CD8-positive, alpha-beta memory T cell (primary cell): ENCODE measurements at regions of chr6 and their contacts with region 1.

Region 1: GRCh38 chr6:26216356-26216885 is 129.2 kb downstream of the HFE start:
- DNase-seq: peak; percentile 43 to 93 (median 91)
- H3K4me3 ChIP-seq: peak overlapping the region; percentile 91
- H3K4me3 Mint-ChIP-seq: no peak overlapping the region
- H3K27ac ChIP-seq: peak overlapping the region; percentile 94
- H3K27ac Mint-ChIP-seq: no peak overlapping the region
- H3K4me1 ChIP-seq: peaks cover 23% of the 10 kb centered on the region
- H3K4me1 Mint-ChIP-seq: peaks cover 2 to 8% (median 5%) of the 10 kb centered on the region in 3 donors
- H3K27me3 ChIP-seq: no peaks in the 10 kb centered on the region
- H3K27me3 Mint-ChIP-seq: no peaks in the 10 kb centered on the region

Region 2: GRCh38 chr6:26115226-26115625 is 101.2 kb before region 1 on chr6:
- CTCF ChIA-PET with region 1: no interaction called
- POLR2A ChIA-PET with region 1: no interaction called
- DNase-seq: no peak
- H3K4me3 ChIP-seq: no peak overlapping the region
- H3K4me3 Mint-ChIP-seq: no peak overlapping the region
- H3K27ac ChIP-seq: no peak overlapping the region
- H3K27ac Mint-ChIP-seq: no peak overlapping the region
- H3K4me1 ChIP-seq: no peaks in the 10 kb centered on the region
- H3K4me1 Mint-ChIP-seq: no peaks in the 10 kb centered on the region
- H3K27me3 ChIP-seq: no peaks in the 10 kb centered on the region
- H3K27me3 Mint-ChIP-seq: peaks cover 0 to 3% of the 10 kb centered on the region in 2 donors

Region 3: GRCh38 chr6:26175428-26176181 is 40.8 kb before region 1 on chr6:
- CTCF ChIA-PET with region 1: interaction called, 21 read pairs
- POLR2A ChIA-PET with region 1: interaction called, 37 read pairs
- DNase-seq: peak; percentile 8 to 63 (median 52)
- H3K4me3 ChIP-seq: no peak overlapping the region
- H3K4me3 Mint-ChIP-seq: peak overlapping the region in 2 of 7 donors; percentile 21 to 75
- H3K27ac ChIP-seq: no peak overlapping the region
- H3K27ac Mint-ChIP-seq: peak overlapping the region; percentile 8 to 89 (median 78)
- H3K4me1 ChIP-seq: peaks cover 36% of the 10 kb centered on the region
- H3K4me1 Mint-ChIP-seq: peaks cover 30 to 44% (median 40%) of the 10 kb centered on the region in 3 donors
- H3K27me3 ChIP-seq: no peaks in the 10 kb centered on the region
- H3K27me3 Mint-ChIP-seq: peaks cover 0 to 3% of the 10 kb centered on the region in 2 donors

Region 4: DNA sequence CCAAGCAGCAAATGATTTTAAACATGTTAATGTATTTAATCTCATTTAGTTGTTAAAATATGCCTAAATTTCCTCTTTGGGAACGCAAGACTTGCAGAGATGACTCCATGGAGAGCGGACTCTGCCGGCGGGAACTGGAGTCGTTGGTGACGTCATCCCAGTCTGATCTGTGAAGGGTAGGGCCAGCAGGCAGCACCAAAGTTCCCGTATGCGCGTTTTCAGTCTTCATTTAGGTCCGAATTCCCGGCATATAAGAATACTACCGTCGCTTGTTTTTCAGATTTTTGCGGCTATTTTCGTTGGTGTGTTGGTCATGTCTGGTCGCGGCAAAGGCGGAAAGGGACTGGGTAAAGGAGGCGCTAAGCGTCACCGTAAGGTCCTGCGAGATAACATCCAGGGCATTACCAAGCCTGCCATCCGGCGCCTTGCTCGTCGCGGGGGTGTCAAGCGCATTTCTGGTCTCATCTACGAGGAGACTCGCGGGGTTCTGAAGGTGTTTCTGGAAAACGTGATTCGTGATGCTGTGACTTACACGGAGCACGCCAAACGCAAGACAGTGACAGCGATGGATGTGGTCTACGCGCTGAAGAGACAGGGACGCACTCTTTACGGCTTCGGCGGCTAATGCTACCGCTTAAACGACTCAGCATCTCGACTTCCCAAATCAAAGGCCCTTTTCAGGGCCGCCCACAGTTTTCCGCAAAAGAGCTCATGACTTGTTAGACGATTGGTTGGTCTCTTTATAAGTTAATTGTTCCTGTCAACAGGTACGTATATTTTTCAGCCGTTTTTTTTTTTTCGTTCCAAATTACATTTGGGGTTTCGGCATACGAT is 11.9 kb before region 1 on chr6:
- CTCF ChIA-PET with region 1: interaction called, 114 read pairs
- POLR2A ChIA-PET with region 1: interaction called, 391 read pairs
- DNase-seq: peak; percentile 75 to 95 (median 87)
- H3K4me3 ChIP-seq: peak overlapping the region; percentile 73
- H3K4me3 Mint-ChIP-seq: no peak overlapping the region
- H3K27ac ChIP-seq: peak overlapping the region; percentile 99
- H3K27ac Mint-ChIP-seq: no peak overlapping the region
- H3K4me1 ChIP-seq: peaks cover 31% of the 10 kb centered on the region
- H3K4me1 Mint-ChIP-seq: peaks cover 18 to 31% (median 20%) of the 10 kb centered on the region in 3 donors
- H3K27me3 ChIP-seq: no peaks in the 10 kb centered on the region
- H3K27me3 Mint-ChIP-seq: peaks cover 0 to 8% of the 10 kb centered on the region in 2 donors

Region 5: GRCh38 chr6:26240154-26241032 is 24.0 kb after region 1 on chr6:
- CTCF ChIA-PET with region 1: interaction called, 40 read pairs
- POLR2A ChIA-PET with region 1: interaction called, 234 read pairs
- DNase-seq: peak; percentile 44 to 82 (median 81)
- H3K4me3 ChIP-seq: peak overlapping the region; percentile 63
- H3K4me3 Mint-ChIP-seq: peak overlapping the region; percentile 82 to 93 (median 85)
- H3K27ac ChIP-seq: peak overlapping the region; percentile 85
- H3K27ac Mint-ChIP-seq: peak overlapping the region; percentile 94 to 99 (median 96)
- H3K4me1 ChIP-seq: peaks cover 13% of the 10 kb centered on the region
- H3K4me1 Mint-ChIP-seq: peaks cover 19 to 31% (median 31%) of the 10 kb centered on the region in 3 donors
- H3K27me3 ChIP-seq: no peaks in the 10 kb centered on the region
- H3K27me3 Mint-ChIP-seq: no peaks in the 10 kb centered on the region

Region 6: DNA sequence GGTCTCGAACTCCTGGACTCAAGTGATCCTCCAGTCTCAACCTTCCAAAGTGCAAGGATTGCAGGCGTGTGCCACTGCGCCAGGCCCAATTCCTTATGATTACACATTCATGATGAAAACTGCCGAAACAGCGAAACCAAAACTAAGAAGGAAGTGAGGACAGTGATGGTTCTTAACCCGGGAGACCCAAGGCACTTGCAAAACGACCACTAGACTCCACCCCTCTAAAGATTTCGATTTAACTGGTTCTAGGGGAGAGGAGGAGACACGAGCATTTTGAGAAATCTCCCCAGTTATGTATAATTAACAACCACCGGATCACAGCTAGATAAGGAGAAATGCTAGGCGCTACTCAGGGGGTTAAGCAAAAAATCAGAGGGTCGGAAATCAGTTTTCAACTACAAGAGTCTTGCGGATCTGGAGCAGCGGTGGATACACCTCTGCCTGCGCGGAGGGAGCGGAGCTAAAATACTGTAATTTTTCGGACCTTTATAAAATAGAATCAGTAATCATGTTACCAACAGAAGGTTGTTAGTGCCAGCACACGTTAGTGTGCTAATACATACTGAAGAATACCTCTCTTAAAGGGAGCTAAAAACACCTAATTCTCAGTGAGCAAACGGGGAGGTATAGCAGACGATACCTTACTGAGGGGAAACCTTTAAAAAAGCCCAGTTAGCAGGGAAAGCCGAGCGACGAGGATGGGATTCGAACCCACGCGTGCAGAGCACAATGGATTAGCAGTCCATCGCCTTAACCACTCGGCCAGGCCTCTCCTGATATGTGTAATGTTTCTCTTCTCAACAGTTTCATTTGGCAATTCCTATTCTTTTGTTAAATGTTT is 88.6 kb after region 1 on chr6:
- CTCF ChIA-PET with region 1: no interaction called
- POLR2A ChIA-PET with region 1: no interaction called
- DNase-seq: peak; percentile 20 to 75 (median 64)
- H3K4me3 ChIP-seq: peak overlapping the region; percentile 49
- H3K4me3 Mint-ChIP-seq: peak overlapping the region; percentile 88 to 95 (median 94)
- H3K27ac ChIP-seq: peak overlapping the region; percentile 65
- H3K27ac Mint-ChIP-seq: peak overlapping the region; percentile 85 to 99 (median 95)
- H3K4me1 ChIP-seq: peaks cover 19% of the 10 kb centered on the region
- H3K4me1 Mint-ChIP-seq: peaks cover 41 to 59% (median 51%) of the 10 kb centered on the region in 3 donors
- H3K27me3 ChIP-seq: no peaks in the 10 kb centered on the region
- H3K27me3 Mint-ChIP-seq: peaks cover 0 to 8% of the 10 kb centered on the region in 2 donors

Region 7: GRCh38 chr6:26421259-26422144 is 205.1 kb after region 1 on chr6:
- CTCF ChIA-PET with region 1: no interaction called
- POLR2A ChIA-PET with region 1: no interaction called
- DNase-seq: peak; percentile 28 to 71 (median 65)
- H3K4me3 ChIP-seq: peak overlapping the region; percentile 81
- H3K4me3 Mint-ChIP-seq: no peak overlapping the region
- H3K27ac ChIP-seq: peak overlapping the region; percentile 83
- H3K27ac Mint-ChIP-seq: no peak overlapping the region
- H3K4me1 ChIP-seq: peaks cover 12% of the 10 kb centered on the region
- H3K4me1 Mint-ChIP-seq: peaks cover 12 to 32% (median 18%) of the 10 kb centered on the region in 3 donors
- H3K27me3 ChIP-seq: no peaks in the 10 kb centered on the region
- H3K27me3 Mint-ChIP-seq: no peaks in the 10 kb centered on the region

Region 8: DNA sequence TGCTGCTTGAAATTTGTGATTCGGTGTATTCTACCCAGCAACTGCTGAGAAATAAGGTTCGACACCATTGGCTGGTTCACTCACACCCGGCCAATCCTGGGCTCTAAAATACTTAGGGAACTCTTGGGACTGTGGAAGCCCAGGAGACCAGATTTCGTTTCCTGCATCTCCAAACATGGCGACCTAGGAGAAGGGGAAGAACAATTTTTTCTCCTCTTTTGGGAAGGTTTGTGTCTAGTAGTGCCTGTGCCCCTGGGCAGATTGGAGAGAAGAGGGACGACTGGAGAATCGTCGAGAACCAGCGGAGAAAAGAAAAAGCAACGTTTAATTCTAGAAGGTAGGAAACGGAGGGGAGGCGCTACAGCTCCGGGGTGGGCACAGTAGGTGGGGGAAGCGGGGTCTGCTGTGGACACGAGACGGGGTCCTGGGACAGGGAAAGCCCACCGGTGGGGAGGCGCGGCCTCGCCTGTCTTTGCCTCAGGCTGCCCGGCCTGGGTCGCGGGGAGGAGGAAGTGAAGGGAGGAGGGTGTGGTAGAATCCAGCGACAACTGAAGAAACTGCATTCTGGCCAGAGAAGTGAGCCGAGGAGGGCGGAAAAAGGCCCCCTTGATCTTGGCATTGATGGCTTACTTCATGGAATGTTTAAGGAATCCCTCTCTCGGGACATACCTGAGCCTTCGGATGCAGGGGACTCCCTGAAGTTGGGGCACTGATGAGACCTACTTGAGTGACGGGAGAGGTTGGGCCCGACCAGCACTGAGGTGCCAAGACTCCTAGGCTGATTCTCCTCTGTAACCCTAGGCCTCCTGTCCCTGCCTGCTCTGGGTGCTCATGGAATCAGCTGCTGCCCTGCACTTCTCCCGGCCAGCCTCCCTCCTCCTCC is 241.6 kb after region 1 on chr6 and contains the start of gene BTN2A1:
- CTCF ChIA-PET with region 1: no interaction called
- POLR2A ChIA-PET with region 1: no interaction called
- DNase-seq: peak; percentile 58 to 82 (median 74)
- H3K4me3 ChIP-seq: peak within 1 kb of the TSS; percentile 81
- H3K4me3 Mint-ChIP-seq: peak within 1 kb of the TSS; percentile 95 to 100 (median 99)
- H3K27ac ChIP-seq: peak within 1 kb of the TSS; percentile 91
- H3K27ac Mint-ChIP-seq: peak within 1 kb of the TSS; percentile 92 to 99 (median 98)
- H3K4me1 ChIP-seq: peaks cover 49% of the 10 kb centered on the region
- H3K4me1 Mint-ChIP-seq: peaks cover 60 to 76% (median 71%) of the 10 kb centered on the region in 3 donors
- H3K27me3 ChIP-seq: no peaks in the 10 kb centered on the region
- H3K27me3 Mint-ChIP-seq: no peaks in the 10 kb centered on the region
- total RNA-seq, gene BTN2A1: 24.0 to 26.4 TPM

Region 9: DNA sequence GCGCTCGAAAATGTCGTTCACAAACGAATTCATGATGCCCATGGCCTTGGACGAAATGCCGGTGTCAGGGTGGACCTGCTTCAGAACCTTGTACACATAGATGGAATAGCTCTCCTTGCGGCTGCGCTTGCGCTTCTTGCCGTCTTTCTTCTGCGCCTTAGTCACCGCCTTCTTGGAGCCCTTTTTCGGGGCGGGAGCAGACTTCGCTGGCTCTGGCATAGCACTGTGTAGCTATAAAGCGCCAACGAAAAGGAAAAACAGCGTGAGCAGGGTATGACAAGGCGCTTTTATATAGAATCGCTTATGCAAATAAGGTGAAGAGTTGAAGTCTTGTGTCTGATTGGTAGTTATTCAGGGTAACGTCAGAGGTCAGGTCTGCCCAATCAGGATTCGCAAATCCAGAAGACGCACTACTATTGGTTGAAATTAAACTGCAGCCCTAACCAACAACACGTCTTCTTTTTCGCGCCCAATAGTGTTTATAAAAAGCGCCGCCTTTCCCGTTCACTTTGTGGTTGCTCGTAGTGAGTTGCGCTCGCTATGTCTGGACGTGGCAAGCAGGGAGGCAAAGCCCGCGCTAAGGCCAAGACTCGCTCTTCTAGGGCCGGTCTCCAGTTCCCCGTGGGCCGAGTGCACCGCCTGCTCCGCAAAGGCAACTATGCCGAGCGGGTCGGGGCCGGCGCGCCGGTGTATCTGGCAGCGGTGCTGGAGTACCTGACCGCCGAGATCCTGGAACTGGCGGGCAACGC is 916.3 kb after region 1 on chr6:
- CTCF ChIA-PET with region 1: interaction called, 4 read pairs
- POLR2A ChIA-PET with region 1: interaction called, 10 read pairs
- DNase-seq: peak; percentile 77 to 98 (median 96)
- H3K4me3 ChIP-seq: peak overlapping the region; percentile 75
- H3K4me3 Mint-ChIP-seq: no peak overlapping the region
- H3K27ac ChIP-seq: peak overlapping the region; percentile 89
- H3K27ac Mint-ChIP-seq: no peak overlapping the region
- H3K4me1 ChIP-seq: peaks cover 20% of the 10 kb centered on the region
- H3K4me1 Mint-ChIP-seq: peaks cover 7 to 21% (median 16%) of the 10 kb centered on the region in 3 donors
- H3K27me3 ChIP-seq: no peaks in the 10 kb centered on the region
- H3K27me3 Mint-ChIP-seq: peaks cover 0 to 2% of the 10 kb centered on the region in 2 donors